ENCODE measurements at regions of chr11 and their contacts with region 1.

Region 1: GRCh38 chr11:68312117-68312779 is at the start of gene LRP5:
- DNase-seq: no peak
- H3K4me3 ChIP-seq: peak within 1 kb of the TSS; percentile 86 to 97
- H3K27ac ChIP-seq: peak within 1 kb of the TSS; percentile 82 to 84
- H3K4me1 ChIP-seq: peaks cover 21 to 30% of the 10 kb centered on the region in 2 donors
- H3K27me3 ChIP-seq: no peaks in the 10 kb centered on the region
- CTCF ChIP-seq: no peak
- total RNA-seq, gene LRP5: 130 TPM

Region 2: GRCh38 chr11:68271781-68272608 is 40.3 kb before region 1 on chr11 and contains the start of gene C11orf24:
- intact Hi-C with region 1: loop called (anchors 2 kb)
- DNase-seq: peak; percentile 80 to 96
- H3K4me3 ChIP-seq: peak within 1 kb of the TSS; percentile 78 to 82
- H3K27ac ChIP-seq: peak within 1 kb of the TSS; percentile 91 to 94
- H3K4me1 ChIP-seq: peaks cover 8 to 19% of the 10 kb centered on the region in 2 donors
- H3K27me3 ChIP-seq: no peaks in the 10 kb centered on the region
- CTCF ChIP-seq: no peak
- total RNA-seq, gene C11orf24: 123 TPM

Region 3: GRCh38 chr11:68342459-68343158 is 30.4 kb after region 1 on chr11:
- intact Hi-C with region 1: loop called (anchors 2 kb)
- DNase-seq: no peak
- H3K4me3 ChIP-seq: peak overlapping the region; percentile 1 to 29
- H3K27ac ChIP-seq: peak overlapping the region; percentile 79 to 83
- H3K4me1 ChIP-seq: peaks cover 20 to 70% of the 10 kb centered on the region in 2 donors
- H3K27me3 ChIP-seq: no peaks in the 10 kb centered on the region
- CTCF ChIP-seq: no peak

Region 4: GRCh38 chr11:68354148-68354872 is 42.1 kb after region 1 on chr11:
- intact Hi-C with region 1: loop called (anchors 2 kb)
- DNase-seq: peak; percentile 53 to 94
- H3K4me3 ChIP-seq: peak overlapping the region in 1 of 2 donors; percentile 25
- H3K27ac ChIP-seq: peak overlapping the region; percentile 73 to 94
- H3K4me1 ChIP-seq: peaks cover 26 to 65% of the 10 kb centered on the region in 2 donors
- H3K27me3 ChIP-seq: no peaks in the 10 kb centered on the region
- CTCF ChIP-seq: no peak